Right cardiac atrium (tissue), 5 donors: ENCODE measurements at regions of chr4 and their contacts with region 1.

Region 1: DNA sequence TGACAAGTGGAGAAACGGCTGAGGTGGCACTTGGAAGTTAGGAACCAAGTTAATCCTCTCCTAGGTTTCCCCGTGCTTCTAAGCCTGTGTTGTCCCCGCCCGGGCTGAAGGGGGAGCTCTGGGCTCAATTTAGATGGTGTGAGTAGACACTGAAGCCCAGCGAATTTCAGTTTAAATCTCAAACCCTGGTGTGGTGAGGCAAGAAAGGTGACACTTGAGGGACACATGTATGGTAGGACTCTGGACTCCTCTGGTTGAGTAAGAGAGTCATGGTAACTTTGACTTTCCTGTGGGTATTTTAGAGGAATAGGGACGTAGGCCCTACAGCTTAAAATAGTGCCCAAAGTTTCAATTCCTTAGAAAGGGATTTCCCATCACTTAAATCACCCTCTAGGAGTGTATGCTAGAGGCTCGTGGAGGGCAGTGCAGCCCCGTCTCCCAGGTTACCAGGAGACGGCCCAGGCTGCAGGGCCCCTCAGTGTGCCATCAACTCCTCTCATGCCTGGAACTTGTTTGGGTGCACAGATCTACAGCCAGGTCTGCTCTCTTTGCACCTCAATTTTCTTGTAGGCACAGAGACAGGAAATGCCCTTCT is 24.0 kb downstream of the HAND2 start:
- DNase-seq: peak; percentile 75 to 88 (median 82)
- ATAC-seq: peak; percentile 62 to 68
- H3K4me3 ChIP-seq: peak overlapping the region; percentile 4
- H3K27ac ChIP-seq: peak overlapping the region; percentile 40
- H3K4me1 ChIP-seq: peaks cover 3% of the 10 kb centered on the region
- H3K27me3 ChIP-seq: no peaks in the 10 kb centered on the region

Region 2: GRCh38 chr4:173752610-173753230 is 246.7 kb after region 1 on chr4:
- intact Hi-C with region 1: loop called in 2 of 4 experiments (anchors 5 to 10 kb)
- DNase-seq: no peak
- ATAC-seq: no peak
- H3K4me3 ChIP-seq: no peak overlapping the region
- H3K27ac ChIP-seq: no peak overlapping the region
- H3K4me1 ChIP-seq: peaks cover 2% of the 10 kb centered on the region
- H3K27me3 ChIP-seq: no peaks in the 10 kb centered on the region

Region 3: GRCh38 chr4:173990126-173990868 is 484.3 kb after region 1 on chr4:
- intact Hi-C with region 1: loop called in 1 of 4 experiments (anchors 5 kb)
- DNase-seq: no peak
- ATAC-seq: peak; percentile 81 to 86
- H3K4me3 ChIP-seq: peak overlapping the region; percentile 30
- H3K27ac ChIP-seq: peak overlapping the region; percentile 79
- H3K4me1 ChIP-seq: no peaks in the 10 kb centered on the region
- H3K27me3 ChIP-seq: no peaks in the 10 kb centered on the region

Region 4: GRCh38 chr4:174120446-174121295 is 614.6 kb after region 1 on chr4:
- intact Hi-C with region 1: loop called in 2 of 4 experiments (anchors 10 kb)
- DNase-seq: peak; percentile 70 to 91 (median 89)
- ATAC-seq: peak; percentile 88 to 93
- H3K4me3 ChIP-seq: peak overlapping the region; percentile 23
- H3K27ac ChIP-seq: no peak overlapping the region
- H3K4me1 ChIP-seq: no peaks in the 10 kb centered on the region
- H3K27me3 ChIP-seq: no peaks in the 10 kb centered on the region

Region 5: GRCh38 chr4:174156239-174156826 is 650.3 kb after region 1 on chr4:
- intact Hi-C with region 1: loop called in 3 of 4 experiments (anchors 5 to 10 kb)
- DNase-seq: no peak
- ATAC-seq: peak; percentile 72 to 82
- H3K4me3 ChIP-seq: no peak overlapping the region
- H3K27ac ChIP-seq: no peak overlapping the region
- H3K4me1 ChIP-seq: no peaks in the 10 kb centered on the region
- H3K27me3 ChIP-seq: no peaks in the 10 kb centered on the region